Activated CD4-positive, alpha-beta memory T cell treated with anti-CD3 and anti-CD28 coated beads, Interleukin-2, amount 10 ng/mL, durations not matched to agents 7 days and 5 days (primary cell): ENCODE measurements at regions of chr10 and their contacts with region 1.

Region 1: DNA sequence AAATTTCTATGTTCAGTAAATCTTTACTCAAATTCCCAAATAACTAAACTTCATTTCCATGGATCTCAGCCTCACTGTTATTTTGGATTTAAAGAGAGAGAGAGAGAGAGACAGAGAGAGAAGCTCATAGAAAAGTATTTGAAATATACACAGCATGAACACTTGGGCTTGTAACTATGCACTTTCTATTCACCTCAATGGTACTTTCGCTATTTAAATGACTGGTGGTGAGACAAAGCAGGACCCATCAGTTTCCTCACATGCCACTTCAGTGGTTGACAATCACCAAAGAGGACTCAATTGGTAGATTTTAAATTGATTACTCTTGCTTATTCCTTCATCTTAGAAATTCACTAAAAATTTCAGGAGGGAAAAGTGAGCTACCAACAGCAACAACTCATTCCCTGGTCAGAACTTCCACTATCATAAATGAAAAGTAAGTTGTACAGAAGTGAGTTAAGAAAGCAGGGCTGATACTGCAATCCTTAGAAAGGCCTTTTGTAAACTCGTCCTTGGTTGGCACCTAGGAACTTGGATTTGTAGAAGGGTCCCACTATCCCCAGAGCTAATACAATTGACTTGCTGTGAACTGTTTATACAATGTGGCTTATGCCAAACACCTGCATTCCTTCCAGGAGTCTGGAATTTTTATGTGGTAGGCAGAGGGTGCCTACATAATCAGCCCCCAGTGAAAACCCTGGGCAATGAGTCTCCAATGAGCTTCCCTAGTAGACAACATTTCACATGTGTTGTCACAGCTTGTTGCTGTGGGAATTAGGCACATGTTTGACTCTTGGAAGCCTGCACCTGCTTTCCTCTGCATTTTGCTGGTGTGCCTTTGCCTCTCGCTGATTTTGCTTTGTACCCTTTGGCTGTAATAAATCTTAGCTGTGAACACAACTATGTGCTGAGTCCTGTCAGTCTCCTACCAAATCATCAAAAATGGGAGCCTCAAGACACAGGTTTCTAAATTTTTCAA is 10.8 kb downstream of the ERLIN1 start:
- DNase-seq: no peak
- H3K4me3 Mint-ChIP-seq: no peak overlapping the region
- H3K27ac Mint-ChIP-seq: no peak overlapping the region
- H3K4me1 Mint-ChIP-seq: peaks cover 31% of the 10 kb centered on the region
- H3K27me3 Mint-ChIP-seq: no peaks in the 10 kb centered on the region

Region 2: GRCh38 chr10:100185364-100186252 is 10.6 kb after region 1 on chr10 and contains the start of gene ERLIN1:
- CTCF ChIA-PET with region 1: no interaction called
- POLR2A ChIA-PET with region 1: interaction called, 37 read pairs
- DNase-seq: peak; percentile 93
- H3K4me3 Mint-ChIP-seq: peak within 1 kb of the TSS; percentile 95
- H3K27ac Mint-ChIP-seq: peak within 1 kb of the TSS; percentile 87
- H3K4me1 Mint-ChIP-seq: peaks cover 60% of the 10 kb centered on the region
- H3K27me3 Mint-ChIP-seq: no peaks in the 10 kb centered on the region
- total RNA-seq, gene ERLIN1: 12.6 to 14.4 TPM